H1 (cell line): ENCODE measurements at regions of chr9 and their contacts with region 1.

Region 1: DNA sequence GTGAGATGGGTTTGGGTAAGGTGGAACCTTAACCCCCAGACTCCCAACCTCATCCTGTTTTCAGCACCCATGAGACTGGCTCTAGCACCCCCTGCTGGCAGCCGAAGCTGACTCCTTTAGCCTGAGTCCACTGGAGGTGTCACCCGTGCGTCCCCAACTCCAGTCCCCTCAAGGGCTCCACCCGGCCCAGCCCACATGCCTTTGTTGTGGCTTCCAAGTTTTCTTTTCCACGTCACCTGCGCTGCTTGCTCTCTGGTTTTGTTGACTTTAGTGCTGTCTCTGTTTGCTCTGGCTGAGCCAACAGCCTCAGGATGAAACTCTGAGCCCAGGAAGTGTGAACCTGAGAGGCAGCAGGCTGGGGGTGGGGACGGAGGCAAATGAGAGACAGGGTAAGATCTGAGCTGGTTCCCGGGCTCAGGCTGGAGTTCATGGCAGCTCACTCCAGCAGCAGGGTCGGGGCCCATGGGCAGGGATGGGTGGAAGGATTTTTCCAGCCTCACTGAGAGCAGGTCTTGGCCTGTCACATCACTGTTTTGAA is 13.2 kb upstream of the AQP7 start:
- DNase-seq: peak; percentile 41 to 93
- H3K4me3 ChIP-seq: no peak overlapping the region
- H3K27ac ChIP-seq: no peak overlapping the region
- H3K4me1 ChIP-seq: peaks cover 0 to 4% (median 3%) of the 10 kb centered on the region in 4 experiments; a peak in 2 of 7 replicates
- H3K27me3 ChIP-seq: no peaks in the 10 kb centered on the region; a peak in 1 of 7 replicates
- CTCF ChIP-seq: peak; percentile 75 to 82 (median 79)
- EP300 ChIP-seq: no peak
- POLR2A ChIP-seq: no peak
- RAD21 ChIP-seq: peak; percentile 63 to 79

Region 2: DNA sequence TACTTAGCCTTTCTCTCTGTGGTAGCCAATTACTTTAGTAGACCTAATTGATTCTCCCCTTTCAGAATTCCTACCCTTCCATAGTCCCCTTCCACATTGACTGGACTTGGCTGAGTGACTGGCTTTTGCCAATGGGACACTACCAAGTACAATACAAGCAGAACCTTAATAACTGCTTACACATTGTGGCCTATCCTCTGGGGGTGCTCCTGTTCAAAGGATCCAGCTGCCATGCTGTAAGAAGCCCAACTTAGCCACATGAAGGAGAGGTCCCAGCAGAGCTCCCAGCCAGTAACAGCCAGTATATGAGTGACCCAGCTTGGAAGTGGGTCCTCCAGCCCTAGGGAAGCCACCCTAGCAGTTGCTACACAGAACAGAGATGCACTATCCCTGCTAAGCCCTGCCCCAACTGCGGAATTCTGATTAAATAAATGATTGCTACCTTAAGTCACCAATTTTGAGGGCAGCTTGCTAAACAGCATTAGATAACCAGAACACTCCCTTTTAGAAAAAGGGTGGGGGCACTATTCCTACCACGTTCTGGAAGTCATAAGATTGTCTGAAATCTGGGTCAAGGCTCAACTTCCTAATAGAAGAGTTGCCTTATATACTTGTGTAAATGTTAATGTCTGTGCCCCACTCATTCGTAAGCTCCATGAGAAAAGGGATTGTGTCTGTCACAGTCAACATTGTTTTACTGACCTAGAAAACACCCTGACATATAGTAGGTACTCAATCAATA is 403.1 kb before region 1 on chr9:
- CTCF ChIA-PET with region 1: no interaction called
- POLR2A ChIA-PET with region 1: no interaction called
- DNase-seq: no peak
- H3K4me3 ChIP-seq: no peak overlapping the region
- H3K27ac ChIP-seq: no peak overlapping the region
- H3K4me1 ChIP-seq: peaks cover 2 to 13% (median 10%) of the 10 kb centered on the region in 4 experiments; a peak in 4 of 7 replicates
- H3K27me3 ChIP-seq: no peaks in the 10 kb centered on the region
- CTCF ChIP-seq: no peak
- EP300 ChIP-seq: no peak
- POLR2A ChIP-seq: no peak
- RAD21 ChIP-seq: no peak

Region 3: DNA sequence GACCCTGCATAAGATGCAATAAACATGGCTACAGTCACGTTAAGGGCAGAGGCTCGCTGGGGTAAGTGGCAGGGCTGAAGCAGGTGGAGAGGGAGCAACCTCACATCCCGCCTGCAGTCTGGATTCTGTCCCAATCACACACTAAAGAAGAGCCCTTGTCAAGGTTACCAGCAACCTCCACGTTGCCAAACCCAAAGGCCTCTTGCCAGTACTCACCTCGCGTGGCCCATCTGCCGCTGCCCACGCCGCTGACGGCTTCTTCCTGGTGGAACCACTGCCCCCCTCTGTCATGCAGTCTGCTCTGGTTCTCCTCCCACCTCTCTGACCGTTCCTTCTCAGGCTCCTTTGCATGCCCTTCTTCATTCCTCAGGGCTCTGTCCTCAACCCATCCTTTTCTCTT is 22.0 kb before region 1 on chr9:
- CTCF ChIA-PET with region 1: interaction called, 14 read pairs
- POLR2A ChIA-PET with region 1: no interaction called
- DNase-seq: no peak
- H3K4me3 ChIP-seq: no peak overlapping the region
- H3K27ac ChIP-seq: no peak overlapping the region
- H3K4me1 ChIP-seq: peaks cover 0 to 4% (median 0%) of the 10 kb centered on the region in 4 experiments; a peak in 1 of 7 replicates
- H3K27me3 ChIP-seq: no peaks in the 10 kb centered on the region
- CTCF ChIP-seq: no peak
- EP300 ChIP-seq: no peak
- POLR2A ChIP-seq: no peak
- RAD21 ChIP-seq: no peak

Region 4: GRCh38 chr9:33404788-33405362 is 10.7 kb before region 1 on chr9:
- CTCF ChIA-PET with region 1: interaction called, 58 read pairs
- POLR2A ChIA-PET with region 1: interaction called, 3 read pairs
- DNase-seq: no peak
- H3K4me3 ChIP-seq: no peak overlapping the region
- H3K27ac ChIP-seq: no peak overlapping the region
- H3K4me1 ChIP-seq: no peaks in the 10 kb centered on the region
- H3K27me3 ChIP-seq: no peaks in the 10 kb centered on the region
- CTCF ChIP-seq: no peak
- EP300 ChIP-seq: no peak
- POLR2A ChIP-seq: no peak
- RAD21 ChIP-seq: no peak

Region 5: GRCh38 chr9:33430942-33431341 is 15.4 kb after region 1 on chr9:
- CTCF ChIA-PET with region 1: interaction called, 63 read pairs
- POLR2A ChIA-PET with region 1: no interaction called
- DNase-seq: no peak
- H3K4me3 ChIP-seq: no peak overlapping the region
- H3K27ac ChIP-seq: no peak overlapping the region
- H3K4me1 ChIP-seq: peaks cover 0 to 2% (median 0%) of the 10 kb centered on the region in 4 experiments; a peak in 1 of 7 replicates
- H3K27me3 ChIP-seq: no peaks in the 10 kb centered on the region
- CTCF ChIP-seq: no peak
- EP300 ChIP-seq: no peak
- POLR2A ChIP-seq: no peak
- RAD21 ChIP-seq: no peak

Region 6: GRCh38 chr9:33446946-33447798 is 31.6 kb after region 1 on chr9 and contains the start of gene AQP3:
- CTCF ChIA-PET with region 1: interaction called, 134 read pairs
- POLR2A ChIA-PET with region 1: no interaction called
- DNase-seq: peak in 1 of 2 experiments; percentile 85
- H3K4me3 ChIP-seq: peak within 1 kb of the TSS; percentile 46 to 67 (median 57)
- H3K27ac ChIP-seq: no peak within 1 kb of the TSS
- H3K4me1 ChIP-seq: peaks cover 0 to 33% (median 16%) of the 10 kb centered on the region in 4 experiments; a peak in 6 of 7 replicates
- H3K27me3 ChIP-seq: peaks cover 0 to 23% (median 12%) of the 10 kb centered on the region in 4 experiments; a peak in 5 of 7 replicates
- CTCF ChIP-seq: peak; percentile 13 to 58 (median 46)
- EP300 ChIP-seq: no peak
- POLR2A ChIP-seq: no peak
- RAD21 ChIP-seq: peak; percentile 19 to 50; a peak in 2 of 4 replicates
- total RNA-seq, gene AQP3: 2.6 and 3.0 TPM in 2 replicates

Region 7: GRCh38 chr9:33466565-33467495 is 51.3 kb after region 1 on chr9:
- CTCF ChIA-PET with region 1: interaction called, 28 read pairs
- POLR2A ChIA-PET with region 1: interaction called, 3 read pairs
- DNase-seq: peak in 1 of 2 experiments; percentile 96
- H3K4me3 ChIP-seq: no peak overlapping the region
- H3K27ac ChIP-seq: peak overlapping the region; percentile 5; the same call in 1 of the 2 replicates
- H3K4me1 ChIP-seq: no peaks in the 10 kb centered on the region
- H3K27me3 ChIP-seq: no peaks in the 10 kb centered on the region
- CTCF ChIP-seq: peak; percentile 94 to 100 (median 99)
- EP300 ChIP-seq: no peak
- POLR2A ChIP-seq: no peak
- RAD21 ChIP-seq: peak; percentile 89 to 95

Region 8: GRCh38 chr9:33473643-33474352 is 58.2 kb after region 1 on chr9 and contains the start of gene NOL6:
- CTCF ChIA-PET with region 1: interaction called, 28 read pairs
- POLR2A ChIA-PET with region 1: interaction called, 3 read pairs
- DNase-seq: peak; percentile 96 to 97
- H3K4me3 ChIP-seq: peak within 1 kb of the TSS; percentile 86 to 98 (median 94)
- H3K27ac ChIP-seq: no peak within 1 kb of the TSS
- H3K4me1 ChIP-seq: peaks cover 0 to 2% (median 0%) of the 10 kb centered on the region in 4 experiments; a peak in 1 of 7 replicates
- H3K27me3 ChIP-seq: no peaks in the 10 kb centered on the region
- CTCF ChIP-seq: no peak
- EP300 ChIP-seq: no peak
- POLR2A ChIP-seq: peak in 1 of 2 experiments; percentile 81; a peak in 1 of 3 replicates
- RAD21 ChIP-seq: no peak
- total RNA-seq, gene NOL6: 55.0 and 57.9 TPM in 2 replicates

Region 9: DNA sequence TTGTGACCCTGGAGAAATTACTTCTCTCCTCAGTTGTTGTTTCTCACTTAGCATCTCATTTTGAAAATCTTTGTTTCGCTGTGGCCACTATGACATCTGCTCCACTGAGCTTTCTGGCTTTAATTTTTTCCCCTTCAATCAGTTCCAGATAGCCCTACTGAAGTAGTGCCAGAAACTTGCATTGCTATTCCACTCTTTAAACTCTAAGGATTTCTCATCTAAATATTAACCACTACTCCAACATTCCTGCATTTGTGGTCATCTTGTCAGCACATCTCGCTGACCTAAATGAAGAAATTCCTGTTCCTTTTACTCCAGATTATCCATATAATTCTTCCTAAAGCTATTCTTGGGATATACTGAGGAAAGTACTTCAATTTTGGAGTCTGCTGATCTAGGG is 73.5 kb after region 1 on chr9:
- CTCF ChIA-PET with region 1: no interaction called
- POLR2A ChIA-PET with region 1: no interaction called
- DNase-seq: no peak
- H3K4me3 ChIP-seq: no peak overlapping the region
- H3K27ac ChIP-seq: no peak overlapping the region
- H3K4me1 ChIP-seq: no peaks in the 10 kb centered on the region
- H3K27me3 ChIP-seq: no peaks in the 10 kb centered on the region
- CTCF ChIP-seq: no peak
- EP300 ChIP-seq: no peak
- POLR2A ChIP-seq: no peak
- RAD21 ChIP-seq: no peak

Region 10: GRCh38 chr9:33611358-33611757 is 195.8 kb after region 1 on chr9:
- CTCF ChIA-PET with region 1: no interaction called
- POLR2A ChIA-PET with region 1: no interaction called
- DNase-seq: no peak
- H3K4me3 ChIP-seq: no peak overlapping the region
- H3K27ac ChIP-seq: no peak overlapping the region
- H3K4me1 ChIP-seq: no peaks in the 10 kb centered on the region
- H3K27me3 ChIP-seq: no peaks in the 10 kb centered on the region
- CTCF ChIP-seq: no peak
- EP300 ChIP-seq: no peak
- POLR2A ChIP-seq: no peak
- RAD21 ChIP-seq: no peak